ENCODE measurements at regions of chr12 and their contacts with region 1.

Region 1: DNA sequence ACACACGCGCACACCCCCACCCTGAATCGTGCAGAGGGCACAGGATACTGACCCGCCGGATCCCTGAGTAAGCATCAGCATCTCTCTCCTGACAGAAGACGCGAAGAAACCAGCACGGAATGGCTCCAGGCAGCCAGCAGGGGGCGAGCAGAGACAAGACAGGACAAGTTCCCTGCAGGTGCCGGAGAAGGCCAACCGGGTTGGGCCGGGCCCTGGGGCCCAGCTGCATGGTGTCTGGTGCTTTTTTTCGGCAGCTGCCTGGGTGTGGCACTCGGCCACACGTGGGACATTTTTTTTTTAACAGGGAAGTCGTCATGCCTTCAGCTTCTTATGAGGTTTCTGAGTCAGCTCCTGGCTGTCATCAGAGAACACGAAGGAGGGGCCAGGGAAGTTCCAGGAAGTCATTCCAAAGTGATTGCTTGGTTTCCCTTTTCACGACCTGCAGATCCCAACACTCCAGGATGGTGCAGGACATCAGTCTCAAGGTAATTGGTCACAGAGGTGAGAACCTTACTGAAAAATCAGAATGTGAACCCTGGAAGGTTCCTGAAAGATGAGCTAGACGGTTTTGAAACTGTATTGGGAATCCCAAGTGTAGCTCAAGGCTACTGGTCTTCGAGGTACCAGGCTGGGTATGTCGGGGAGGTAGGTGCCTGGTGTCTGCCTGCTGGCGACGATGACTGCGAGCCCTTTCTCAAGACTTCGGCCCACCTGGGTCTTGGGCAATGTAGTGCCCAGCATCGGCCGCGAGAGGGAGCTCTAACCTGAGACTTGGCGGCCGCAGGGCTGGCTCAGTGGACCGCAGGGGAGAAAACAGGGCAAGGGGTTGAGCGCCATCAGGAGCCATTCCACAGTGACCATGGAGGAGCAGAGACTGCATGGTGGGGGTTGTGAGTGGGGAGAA is 190.8 kb upstream of the PRMT8 start:
- H3K4me3 ChIP-seq: no peak overlapping the region
- H3K27ac ChIP-seq: peak overlapping the region; percentile 27; the same call in 1 of the 2 replicates
- H3K4me1 ChIP-seq: no peaks in the 10 kb centered on the region; the same call in 1 of the 2 replicates
- CTCF ChIP-seq: peak; percentile 90

Region 2: GRCh38 chr12:2893007-2893406 is 407.2 kb before region 1 on chr12:
- CTCF ChIA-PET with region 1: no interaction called
- POLR2A ChIA-PET with region 1: no interaction called
- H3K4me3 ChIP-seq: no peak overlapping the region
- H3K27ac ChIP-seq: no peak overlapping the region
- H3K4me1 ChIP-seq: peaks cover 6% of the 10 kb centered on the region
- CTCF ChIP-seq: no peak

Region 3: DNA sequence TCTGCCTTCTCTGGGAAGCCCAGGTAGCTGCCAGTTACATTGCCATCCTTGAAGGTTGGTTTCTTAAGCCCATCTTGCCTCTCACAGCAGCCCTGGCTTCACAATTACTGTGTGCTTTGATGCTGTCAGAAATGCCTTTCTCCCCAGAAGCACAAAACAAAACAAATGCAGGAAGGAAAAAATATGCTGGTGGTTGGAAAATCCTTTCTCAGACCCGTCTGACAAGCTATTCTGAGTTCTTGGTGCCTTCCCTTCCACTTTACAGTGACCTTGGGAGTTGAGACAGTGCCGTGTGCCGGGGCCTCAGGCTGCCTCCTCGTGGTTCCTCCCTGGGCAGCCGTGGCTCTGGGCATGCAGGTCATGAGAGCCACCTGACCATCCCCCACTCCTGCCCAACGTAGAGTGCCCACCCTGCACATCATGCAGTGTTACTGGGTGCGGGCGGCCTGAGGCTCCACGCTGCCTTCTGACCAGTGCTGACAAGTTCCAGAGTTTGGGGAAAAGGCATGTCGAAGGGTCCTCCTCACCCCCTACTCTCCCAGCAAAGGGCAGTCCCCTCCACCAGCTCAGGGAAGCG is 32.6 kb before region 1 on chr12:
- CTCF ChIA-PET with region 1: no interaction called
- POLR2A ChIA-PET with region 1: no interaction called
- H3K4me3 ChIP-seq: no peak overlapping the region
- H3K27ac ChIP-seq: no peak overlapping the region
- H3K4me1 ChIP-seq: no peaks in the 10 kb centered on the region
- CTCF ChIP-seq: no peak

Region 4: DNA sequence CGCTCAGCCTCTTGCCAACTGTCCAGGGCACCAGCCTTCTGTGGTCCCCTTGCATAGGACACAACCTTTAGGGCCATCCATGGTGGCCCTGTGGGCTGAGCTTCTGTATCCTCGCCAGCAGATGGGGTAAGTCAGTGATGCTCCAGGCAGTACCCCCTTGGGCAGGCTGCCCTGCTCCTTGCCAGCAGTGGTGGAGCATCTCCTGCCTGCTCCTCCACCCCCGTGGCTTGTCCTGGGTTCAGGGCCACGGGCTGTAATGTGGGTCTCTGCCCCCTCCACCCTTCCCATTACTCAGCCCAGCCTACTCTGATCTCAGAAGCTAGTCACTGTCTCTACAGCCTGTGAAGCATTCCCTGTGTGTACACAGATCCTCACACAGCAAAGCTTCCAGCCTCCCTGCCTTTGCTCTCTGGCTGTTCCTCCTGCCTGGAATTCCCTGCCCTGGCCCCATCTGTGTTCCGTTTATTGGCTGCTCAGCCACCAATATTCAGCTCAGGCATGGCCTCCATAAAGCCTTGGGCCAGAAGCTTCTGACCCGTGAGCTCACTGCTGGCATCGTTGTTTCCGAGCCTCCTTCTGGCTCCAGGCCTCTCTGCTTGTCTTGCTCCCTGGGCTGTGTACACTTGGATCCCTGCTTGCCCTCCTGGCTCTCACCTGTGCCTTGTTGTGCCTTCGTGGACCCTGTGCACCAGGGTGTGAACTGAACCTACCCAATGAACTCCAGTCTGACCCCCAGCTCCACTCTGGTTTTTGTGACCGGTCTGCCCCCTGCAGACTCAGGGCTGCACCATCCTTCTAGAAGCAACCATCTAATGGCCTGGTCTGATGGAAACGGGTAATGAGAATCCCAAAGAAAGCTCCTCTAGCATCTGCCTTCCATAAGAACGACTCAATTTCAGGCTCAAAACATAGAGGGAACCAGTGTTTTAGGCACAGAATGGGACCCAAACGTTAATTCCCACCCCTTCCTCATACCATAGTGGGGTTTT is 13.8 kb after region 1 on chr12:
- CTCF ChIA-PET with region 1: interaction called, 96 read pairs
- POLR2A ChIA-PET with region 1: no interaction called
- H3K4me3 ChIP-seq: no peak overlapping the region
- H3K27ac ChIP-seq: no peak overlapping the region
- H3K4me1 ChIP-seq: no peaks in the 10 kb centered on the region
- CTCF ChIP-seq: peak; percentile 20; the same call in 1 of the 2 replicates

Region 5: DNA sequence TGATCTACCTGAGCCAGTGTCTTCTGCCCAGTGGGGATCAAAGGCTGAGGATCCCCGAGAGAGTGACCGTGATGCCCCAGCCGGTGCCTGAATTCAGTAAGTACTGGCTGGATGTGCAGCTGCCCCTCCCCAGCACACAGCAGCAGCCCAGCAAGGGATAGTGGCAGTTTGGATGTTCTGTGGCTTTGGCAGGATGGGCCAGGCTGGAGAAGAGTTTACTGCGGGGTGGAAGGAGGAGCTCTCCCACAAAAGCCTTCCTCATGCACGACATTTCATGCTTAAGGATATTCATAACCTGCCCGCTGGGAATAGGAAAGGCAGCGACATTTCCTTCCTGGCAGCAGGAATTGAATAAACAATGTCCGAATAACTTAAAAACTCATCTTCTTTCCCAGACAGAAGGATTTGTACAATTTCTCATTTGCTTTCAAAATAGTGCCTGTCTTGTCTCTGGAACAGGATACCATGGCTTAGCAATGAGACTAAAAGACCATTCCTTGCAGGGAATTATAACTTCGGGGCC is 55.3 kb after region 1 on chr12:
- CTCF ChIA-PET with region 1: interaction called, 14 read pairs
- POLR2A ChIA-PET with region 1: no interaction called
- H3K4me3 ChIP-seq: no peak overlapping the region
- H3K27ac ChIP-seq: no peak overlapping the region
- H3K4me1 ChIP-seq: no peaks in the 10 kb centered on the region
- CTCF ChIP-seq: no peak

Region 6: GRCh38 chr12:3476403-3476802 is 176.2 kb after region 1 on chr12:
- CTCF ChIA-PET with region 1: interaction called, 15 read pairs
- POLR2A ChIA-PET with region 1: no interaction called
- H3K4me3 ChIP-seq: no peak overlapping the region
- H3K27ac ChIP-seq: no peak overlapping the region
- H3K4me1 ChIP-seq: no peaks in the 10 kb centered on the region
- CTCF ChIP-seq: no peak

Region 7: GRCh38 chr12:3680896-3681594 is 380.9 kb after region 1 on chr12:
- CTCF ChIA-PET with region 1: interaction called, 25 read pairs
- POLR2A ChIA-PET with region 1: no interaction called
- H3K4me3 ChIP-seq: no peak overlapping the region
- H3K27ac ChIP-seq: no peak overlapping the region
- H3K4me1 ChIP-seq: no peaks in the 10 kb centered on the region
- CTCF ChIP-seq: no peak

Region 8: DNA sequence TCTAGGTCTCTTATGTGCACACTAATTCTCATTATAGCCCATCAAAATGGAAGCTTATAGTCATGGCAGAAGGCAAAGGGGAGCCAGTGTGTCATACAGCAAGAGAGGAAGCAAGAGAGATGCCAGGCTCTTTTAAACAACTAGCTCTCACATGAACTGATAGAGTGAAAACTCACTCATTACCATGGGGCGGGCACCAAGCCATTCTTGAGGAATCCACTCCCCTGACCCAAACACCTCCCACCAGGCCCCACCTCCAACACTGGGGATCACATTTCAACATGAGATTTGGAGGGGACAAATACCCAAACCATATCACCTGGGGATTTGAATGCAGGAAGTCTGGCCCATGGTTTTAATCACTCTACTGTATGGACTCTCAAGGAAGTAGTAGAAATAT is 489.7 kb after region 1 on chr12:
- CTCF ChIA-PET with region 1: interaction called, 22 read pairs
- POLR2A ChIA-PET with region 1: no interaction called
- H3K4me3 ChIP-seq: no peak overlapping the region
- H3K27ac ChIP-seq: no peak overlapping the region
- H3K4me1 ChIP-seq: no peaks in the 10 kb centered on the region
- CTCF ChIP-seq: no peak

Measured in HEK293 (cell line).